ENCODE measurements at regions of chr3 and their contacts with region 1.

Region 1: GRCh38 chr3:38738630-38739395 is 77.2 kb downstream of the SCN10A start:
- DNase-seq: peak; percentile 47
- ATAC-seq: peak; percentile 94
- H3K4me3 ChIP-seq: no peak overlapping the region
- H3K27ac ChIP-seq: no peak overlapping the region
- H3K4me1 ChIP-seq: no peaks in the 10 kb centered on the region
- H3K27me3 ChIP-seq: peaks cover 10% of the 10 kb centered on the region; the same call in 1 of the 2 replicates
- CTCF ChIP-seq: peak; percentile 87 to 94 (median 94)
- POLR2A ChIP-seq: no peak
- RAD21 ChIP-seq: peak; percentile 79

Region 2: GRCh38 chr3:39025222-39025970 is 286.6 kb after region 1 on chr3:
- CTCF ChIA-PET with region 1: interaction called, 3 read pairs
- POLR2A ChIA-PET with region 1: no interaction called
- RAD21 ChIA-PET with region 1: no interaction called
- intact Hi-C with region 1: loop called (anchors 1 kb)
- DNase-seq: no peak
- ATAC-seq: no peak
- H3K4me3 ChIP-seq: no peak overlapping the region
- H3K27ac ChIP-seq: no peak overlapping the region
- H3K4me1 ChIP-seq: no peaks in the 10 kb centered on the region
- H3K27me3 ChIP-seq: peaks cover 6% of the 10 kb centered on the region
- CTCF ChIP-seq: no peak
- POLR2A ChIP-seq: no peak
- RAD21 ChIP-seq: no peak

Measured in HCT116 (cell line).